HepG2 (cell line): ENCODE measurements at regions of chr13 and their contacts with region 1.

Region 1: DNA sequence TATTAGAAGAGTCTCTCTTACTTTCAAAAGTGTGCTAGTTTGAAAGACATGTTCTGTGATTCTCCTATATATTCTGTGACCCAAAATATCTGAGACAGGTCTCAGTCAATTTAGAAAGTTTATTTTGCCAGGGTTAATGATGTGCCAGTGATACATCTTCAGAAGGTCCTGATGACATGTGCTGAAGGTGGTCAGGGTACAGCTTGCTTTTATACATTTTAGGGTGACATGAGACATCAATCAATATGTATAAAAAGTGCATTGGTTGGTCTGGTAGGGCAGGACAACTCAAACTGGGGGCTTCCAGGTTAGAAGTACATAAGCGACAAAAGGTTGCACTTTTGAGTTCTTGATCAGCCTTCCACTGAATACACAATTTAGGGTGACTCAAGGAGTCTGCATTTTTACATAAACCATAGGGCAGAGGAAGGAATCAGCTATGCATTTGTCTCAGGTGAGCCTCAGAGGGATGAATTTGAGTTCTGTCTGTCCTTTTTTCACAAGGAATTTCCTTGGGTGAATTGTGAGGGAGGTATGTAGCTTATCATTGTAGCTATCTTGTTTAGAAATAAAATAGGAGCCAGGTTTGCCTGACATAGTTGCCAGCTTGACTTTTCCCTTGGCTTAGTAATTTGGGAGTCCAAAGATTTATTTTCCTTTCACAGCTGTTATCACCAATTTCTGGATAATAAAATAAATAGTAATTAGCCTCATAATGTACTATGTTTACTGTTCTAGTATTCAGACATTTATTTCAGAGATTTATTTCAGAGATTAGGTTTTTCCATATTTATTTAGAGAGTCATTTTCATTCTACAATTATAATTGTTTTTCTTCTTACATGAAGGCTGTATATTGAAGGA is 1421.4 kb upstream of the ATXN8OS start:
- DNase-seq: no peak
- ATAC-seq: no peak
- H3K4me3 ChIP-seq: no peak overlapping the region
- H3K27ac ChIP-seq: no peak overlapping the region
- H3K4me1 ChIP-seq: no peaks in the 10 kb centered on the region
- H3K27me3 ChIP-seq: no peaks in the 10 kb centered on the region
- CTCF ChIP-seq: no peak
- EP300 ChIP-seq: no peak
- POLR2A ChIP-seq: no peak
- RAD21 ChIP-seq: no peak

Region 2: DNA sequence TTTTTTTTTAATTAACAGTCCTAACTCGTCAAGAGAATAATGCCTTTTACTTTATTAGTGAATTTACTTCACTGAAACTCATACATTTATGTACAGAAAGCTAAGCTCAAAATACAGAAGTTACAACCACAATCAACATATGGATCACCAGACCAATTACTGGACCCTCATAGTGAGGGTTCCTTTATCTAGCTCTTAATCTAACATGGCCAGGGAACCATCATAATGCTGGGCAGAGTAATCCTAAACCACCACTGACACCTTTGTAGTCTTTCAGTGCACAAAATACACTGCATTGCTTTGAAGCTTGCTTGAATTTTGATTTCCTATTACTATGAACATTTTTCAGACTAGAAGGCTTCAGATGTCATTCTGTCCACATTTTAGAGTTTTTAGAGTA is 49.5 kb before region 1 on chr13:
- CTCF ChIA-PET with region 1: no interaction called
- POLR2A ChIA-PET with region 1: no interaction called
- in situ Hi-C with region 1: no loop called
- intact Hi-C with region 1: no loop called
- DNase-seq: no peak
- ATAC-seq: no peak
- H3K4me3 ChIP-seq: no peak overlapping the region
- H3K27ac ChIP-seq: no peak overlapping the region
- H3K4me1 ChIP-seq: no peaks in the 10 kb centered on the region
- H3K27me3 ChIP-seq: no peaks in the 10 kb centered on the region
- CTCF ChIP-seq: no peak
- EP300 ChIP-seq: no peak
- POLR2A ChIP-seq: no peak
- RAD21 ChIP-seq: no peak

Region 3: GRCh38 chr13:68748038-68748437 is 61.8 kb after region 1 on chr13:
- CTCF ChIA-PET with region 1: no interaction called
- POLR2A ChIA-PET with region 1: no interaction called
- in situ Hi-C with region 1: loop called (anchors 10 kb)
- intact Hi-C with region 1: no loop called
- DNase-seq: no peak
- ATAC-seq: no peak
- H3K4me3 ChIP-seq: no peak overlapping the region
- H3K27ac ChIP-seq: no peak overlapping the region
- H3K4me1 ChIP-seq: no peaks in the 10 kb centered on the region
- H3K27me3 ChIP-seq: no peaks in the 10 kb centered on the region
- CTCF ChIP-seq: no peak
- EP300 ChIP-seq: no peak
- POLR2A ChIP-seq: no peak
- RAD21 ChIP-seq: no peak